AG04450 (cell line): ENCODE measurements at regions of chr11 and their contacts with region 1.

Region 1: GRCh38 chr11:112588252-112588694 is 327.6 kb upstream of the PLET1 start:
- DNase-seq: peak; percentile 54
- H3K4me3 ChIP-seq: no peak overlapping the region
- H3K27ac ChIP-seq: no peak overlapping the region
- H3K27me3 ChIP-seq: no peaks in the 10 kb centered on the region
- CTCF ChIP-seq: peak; percentile 67

Region 2: DNA sequence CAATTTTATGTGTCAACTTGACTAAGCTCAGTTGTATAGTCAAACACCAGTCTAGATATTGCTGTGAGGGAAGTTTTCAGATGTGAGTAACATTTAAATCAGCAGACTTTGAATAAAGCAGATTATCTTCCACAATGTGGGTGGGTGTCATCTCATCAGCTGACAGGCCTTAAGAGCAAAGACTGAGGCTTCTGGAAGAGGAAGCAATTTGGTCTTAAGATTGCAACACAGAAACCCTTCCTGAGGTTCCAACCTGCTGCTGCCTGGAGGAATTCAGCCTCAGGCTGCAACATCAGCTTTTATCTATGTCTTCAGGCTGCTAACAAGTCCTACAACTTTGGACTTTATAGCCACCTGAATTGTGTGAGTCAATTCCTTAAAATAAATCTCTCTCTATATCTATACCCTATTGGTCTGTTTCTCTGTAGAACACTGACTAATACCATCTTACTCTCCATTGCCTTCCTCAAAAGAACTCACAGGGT is 50.4 kb before region 1 on chr11:
- CTCF ChIA-PET with region 1: interaction called, 13 read pairs
- POLR2A ChIA-PET with region 1: no interaction called
- DNase-seq: no peak
- H3K4me3 ChIP-seq: no peak overlapping the region
- H3K27ac ChIP-seq: no peak overlapping the region
- H3K27me3 ChIP-seq: peaks cover 5% of the 10 kb centered on the region
- CTCF ChIP-seq: no peak

Region 3: GRCh38 chr11:112564228-112564955 is 23.9 kb before region 1 on chr11:
- CTCF ChIA-PET with region 1: interaction called, 26 read pairs
- POLR2A ChIA-PET with region 1: no interaction called
- DNase-seq: peak; percentile 53
- H3K4me3 ChIP-seq: no peak overlapping the region
- H3K27ac ChIP-seq: peak overlapping the region; percentile 3
- H3K27me3 ChIP-seq: peaks cover 9% of the 10 kb centered on the region
- CTCF ChIP-seq: no peak

Region 4: DNA sequence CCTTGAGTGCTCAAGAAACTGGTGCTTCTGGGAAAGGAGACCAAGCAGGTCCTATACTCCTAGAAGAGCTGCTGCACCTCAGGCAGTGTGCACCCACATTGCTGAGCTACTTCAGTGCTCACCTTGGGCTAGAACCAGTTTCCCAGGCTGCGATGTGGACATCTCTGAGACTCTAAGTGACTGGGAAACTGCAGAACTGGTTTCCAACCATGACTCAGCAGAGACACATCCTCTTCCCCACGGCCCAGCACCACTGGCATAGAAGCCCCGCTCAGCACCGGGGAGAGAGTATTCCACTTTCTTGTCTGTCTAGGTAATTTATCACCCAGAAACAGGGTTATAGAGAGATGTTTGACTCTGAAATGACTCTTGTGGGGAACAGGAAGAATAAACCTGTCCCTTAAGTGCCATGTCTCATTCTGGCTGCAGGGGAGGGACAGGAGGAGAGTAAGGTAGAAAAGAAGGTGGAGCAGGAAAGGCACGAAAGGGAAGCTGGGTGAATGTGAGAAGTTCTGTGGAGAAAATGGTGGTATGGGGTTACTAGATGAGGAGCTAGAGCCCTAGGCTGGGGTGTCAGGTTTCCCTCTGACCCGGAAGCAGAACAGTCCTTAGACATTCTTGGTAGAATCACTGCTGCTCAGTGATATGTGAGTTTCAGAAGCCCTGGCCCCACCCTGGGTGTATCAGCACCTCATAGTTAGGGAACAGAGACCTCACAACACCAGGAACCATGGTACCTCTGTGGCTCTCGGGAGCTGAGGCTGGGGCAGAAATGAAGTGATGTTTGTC is 32.5 kb after region 1 on chr11:
- CTCF ChIA-PET with region 1: interaction called, 13 read pairs
- POLR2A ChIA-PET with region 1: no interaction called
- DNase-seq: no peak
- H3K4me3 ChIP-seq: no peak overlapping the region
- H3K27ac ChIP-seq: no peak overlapping the region
- H3K27me3 ChIP-seq: no peaks in the 10 kb centered on the region
- CTCF ChIP-seq: no peak

Region 5: GRCh38 chr11:113289431-113290187 is 701.3 kb after region 1 on chr11:
- CTCF ChIA-PET with region 1: interaction called, 171 read pairs
- POLR2A ChIA-PET with region 1: no interaction called
- DNase-seq: peak; percentile 20
- H3K4me3 ChIP-seq: no peak overlapping the region
- H3K27ac ChIP-seq: no peak overlapping the region
- H3K27me3 ChIP-seq: no peaks in the 10 kb centered on the region
- CTCF ChIP-seq: peak; percentile 95